Keratinocyte (primary cell): ENCODE measurements at regions of chr12 and their contacts with region 1.

Region 1: DNA sequence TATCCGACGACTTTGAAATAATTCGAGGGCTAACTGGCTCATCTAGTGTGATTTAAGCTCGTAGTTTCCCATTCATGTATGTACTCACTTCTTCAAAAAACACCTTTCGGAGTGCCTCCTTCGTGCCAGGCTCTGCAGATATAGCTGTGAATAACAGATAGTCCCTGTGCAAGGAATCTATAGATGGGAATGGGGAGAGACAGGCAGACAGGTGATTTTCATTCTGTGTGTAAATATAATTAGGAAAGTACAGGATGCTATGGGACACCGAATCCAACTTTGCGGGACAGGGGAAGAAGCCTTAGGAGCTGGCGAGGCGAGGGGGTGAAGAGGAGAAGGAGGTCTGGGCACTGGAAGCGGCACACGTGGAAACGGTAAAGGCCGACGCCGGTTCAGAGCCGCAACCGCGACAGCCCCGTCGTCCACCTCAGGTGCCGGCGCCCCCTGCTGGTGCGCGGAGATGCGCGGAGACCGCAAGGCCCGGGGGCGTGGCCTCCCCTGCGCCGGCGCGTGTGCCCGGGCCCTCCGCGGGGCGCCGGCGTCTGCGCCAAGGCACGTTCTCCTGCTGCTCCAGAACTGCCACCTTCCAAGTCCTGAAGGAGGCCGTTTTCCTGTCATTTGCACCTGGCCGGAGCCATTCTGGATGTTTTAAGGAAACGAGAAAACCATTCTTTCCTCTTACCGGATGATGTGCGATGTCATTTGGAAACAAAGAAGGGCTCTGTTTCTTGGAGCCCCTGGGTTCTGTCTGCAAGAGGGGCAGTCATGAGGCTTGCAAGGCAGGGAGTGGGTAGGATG is 18.0 kb upstream of the CACNA1C start:
- DNase-seq: no peak
- H3K4me3 ChIP-seq: peak overlapping the region in 2 of 3 experiments; percentile 30 to 41
- H3K27ac ChIP-seq: no peak overlapping the region
- H3K4me1 ChIP-seq: peaks cover 9% of the 10 kb centered on the region
- H3K27me3 ChIP-seq: peaks cover 19% of the 10 kb centered on the region
- CTCF ChIP-seq: peak; percentile 73 to 95 (median 90)

Region 2: DNA sequence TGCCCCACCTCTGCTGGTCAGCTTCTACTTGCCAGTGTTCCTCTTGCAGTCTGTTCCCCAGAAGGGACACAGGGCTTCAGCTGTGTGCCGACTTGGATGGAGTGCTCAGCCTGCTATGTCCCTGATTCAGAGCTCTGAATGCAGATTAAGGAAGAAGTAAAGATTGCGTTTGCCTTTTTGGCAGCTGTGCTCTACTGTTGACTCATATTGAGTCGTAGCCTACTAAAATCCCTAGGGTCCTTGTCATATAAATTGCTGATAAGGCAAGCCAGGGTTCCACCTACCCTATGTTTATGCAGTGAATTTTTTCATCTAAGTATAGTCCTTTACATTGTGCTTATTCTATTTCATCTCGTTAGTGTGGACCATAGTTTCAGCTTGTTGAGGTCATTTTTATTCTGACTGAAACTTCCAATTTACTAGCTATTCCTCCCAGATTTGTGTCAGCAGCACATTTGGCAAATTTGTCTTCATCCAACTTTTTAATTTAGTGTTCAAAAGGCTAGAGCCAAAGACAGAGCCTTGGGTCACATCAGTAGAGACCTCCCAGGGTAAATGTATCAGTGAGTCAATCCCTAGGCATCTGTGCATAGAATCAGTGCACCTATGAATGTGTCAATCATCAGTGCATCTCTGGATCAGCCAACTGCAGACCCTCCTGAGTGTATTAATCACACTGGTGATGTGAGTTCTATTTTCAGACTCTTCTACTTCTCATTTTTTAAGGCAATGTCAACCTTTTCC is 49.9 kb after region 1 on chr12:
- dilution Hi-C with region 1: no loop called
- DNase-seq: no peak
- H3K4me3 ChIP-seq: no peak overlapping the region
- H3K27ac ChIP-seq: no peak overlapping the region
- H3K4me1 ChIP-seq: no peaks in the 10 kb centered on the region
- H3K27me3 ChIP-seq: no peaks in the 10 kb centered on the region
- CTCF ChIP-seq: no peak

Region 3: DNA sequence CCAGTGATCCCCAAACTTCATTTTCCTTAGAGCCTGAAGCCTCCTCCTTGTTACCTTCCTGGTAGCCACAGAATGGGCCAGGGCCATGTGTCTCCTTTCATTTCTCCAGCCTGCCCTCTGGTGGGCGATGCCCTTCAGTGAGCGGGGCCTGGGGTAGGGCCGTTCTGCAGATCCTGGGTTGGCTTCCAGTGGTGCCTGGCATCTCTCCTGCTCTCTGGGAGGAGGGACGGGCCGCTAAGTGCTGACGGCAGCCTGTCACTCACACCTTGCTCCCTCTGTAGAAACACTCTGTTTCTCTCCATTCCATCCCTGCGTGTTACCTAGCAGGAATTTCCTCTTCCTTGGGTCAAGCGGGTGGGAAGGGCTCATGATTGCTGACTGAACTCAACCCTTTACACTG is 250.0 kb after region 1 on chr12:
- dilution Hi-C with region 1: loop called (anchors 25 kb)
- DNase-seq: no peak
- H3K4me3 ChIP-seq: no peak overlapping the region
- H3K27ac ChIP-seq: no peak overlapping the region
- H3K4me1 ChIP-seq: no peaks in the 10 kb centered on the region
- H3K27me3 ChIP-seq: peaks cover 26% of the 10 kb centered on the region
- CTCF ChIP-seq: peak; percentile 51 to 78 (median 67)